Tibial artery (tissue), 4 donors: ENCODE measurements at regions of chr11 and their contacts with region 1.

Region 1: GRCh38 chr11:15074206-15075161 is 1.1 kb downstream of the CALCB start:
- DNase-seq: peak; percentile 78 to 79
- H3K4me3 ChIP-seq: peak overlapping the region; percentile 22 to 33
- H3K27ac ChIP-seq: no peak overlapping the region
- H3K4me1 ChIP-seq: peaks cover 0 to 21% (median 18%) of the 10 kb centered on the region in 4 donors
- H3K27me3 ChIP-seq: peaks cover 0 to 50% of the 10 kb centered on the region in 2 donors
- CTCF ChIP-seq: peak; percentile 56 to 65

Region 2: DNA sequence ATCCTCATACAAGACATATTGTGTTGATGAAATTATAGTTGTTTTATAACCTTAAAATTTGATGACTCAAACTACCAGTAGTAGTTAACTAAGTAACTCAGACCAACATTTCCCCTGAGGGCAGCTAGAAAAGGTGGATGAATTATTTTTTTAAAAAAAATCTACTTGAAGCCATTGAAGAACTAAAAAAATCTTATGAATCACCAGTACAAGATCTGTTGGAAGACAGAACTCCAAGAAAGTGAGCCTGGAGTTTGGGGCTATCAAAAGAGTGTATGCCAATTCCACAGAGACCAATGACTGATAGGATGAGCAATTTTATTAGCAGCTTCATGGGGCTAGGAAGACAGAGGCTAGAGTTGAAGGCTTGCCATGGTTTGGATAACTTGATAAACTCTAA is 254.9 kb before region 1 on chr11:
- intact Hi-C with region 1: no loop called
- DNase-seq: no peak
- H3K4me3 ChIP-seq: no peak overlapping the region
- H3K27ac ChIP-seq: no peak overlapping the region
- H3K4me1 ChIP-seq: no peaks in the 10 kb centered on the region
- H3K27me3 ChIP-seq: no peaks in the 10 kb centered on the region
- CTCF ChIP-seq: no peak

Region 3: DNA sequence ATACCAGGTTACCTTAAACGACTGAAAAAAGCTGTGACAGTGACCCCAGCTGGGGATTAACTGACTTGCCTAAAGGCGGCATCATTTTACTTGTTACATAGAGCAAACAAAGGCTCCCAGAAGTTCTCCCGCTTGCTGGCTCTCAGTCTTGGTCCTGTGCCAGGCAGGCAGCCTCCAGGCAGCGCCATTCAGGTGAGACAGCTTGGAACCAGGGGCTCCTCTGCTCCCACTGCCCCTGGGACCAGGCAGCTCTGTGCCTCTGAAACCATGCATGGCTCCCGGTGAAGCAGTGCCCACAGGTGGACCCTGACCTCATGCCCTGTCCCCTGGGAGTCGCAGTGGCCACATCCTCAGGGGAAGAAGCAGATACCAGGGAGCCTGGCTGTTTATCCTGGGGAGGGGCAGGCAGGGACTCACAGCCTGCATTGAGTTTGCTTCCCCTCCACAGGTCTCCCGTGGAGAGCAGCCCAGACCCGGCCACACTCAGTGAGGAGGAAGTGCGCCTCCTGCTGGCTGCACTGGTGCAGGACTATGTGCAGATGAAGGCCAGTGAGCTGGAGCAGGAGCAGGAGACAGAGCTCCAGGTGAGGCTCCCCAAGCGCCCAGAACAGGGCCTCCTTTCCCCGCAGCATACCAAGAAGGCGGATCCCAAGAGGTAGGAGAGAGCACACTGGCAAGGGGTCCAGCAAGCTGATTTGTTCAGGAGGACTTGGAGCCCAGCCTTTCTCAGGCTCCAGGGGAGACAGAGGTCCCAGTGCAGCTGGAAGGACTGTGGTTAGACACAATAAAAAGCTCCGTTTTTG is 166.9 kb before region 1 on chr11:
- intact Hi-C with region 1: loop called (anchors 5 kb)
- DNase-seq: peak; percentile 78 to 80
- H3K4me3 ChIP-seq: no peak overlapping the region
- H3K27ac ChIP-seq: no peak overlapping the region
- H3K4me1 ChIP-seq: peaks cover 0 to 14% (median 14%) of the 10 kb centered on the region in 4 donors
- H3K27me3 ChIP-seq: peaks cover 0 to 3% of the 10 kb centered on the region in 2 donors
- CTCF ChIP-seq: peak; percentile 50 to 61

Region 4: GRCh38 chr11:14974515-14975251 is 99.8 kb before region 1 on chr11:
- intact Hi-C with region 1: loop called (anchors 10 kb)
- DNase-seq: no peak
- H3K4me3 ChIP-seq: peak overlapping the region; percentile 16 to 42
- H3K27ac ChIP-seq: no peak overlapping the region
- H3K4me1 ChIP-seq: peaks cover 0 to 38% (median 28%) of the 10 kb centered on the region in 4 donors
- H3K27me3 ChIP-seq: peaks cover 0 to 67% of the 10 kb centered on the region in 2 donors
- CTCF ChIP-seq: peak in 1 of 2 experiments; percentile 35